ENCODE measurements at regions of chr3 and their contacts with region 1.

Region 1: GRCh38 chr3:19256313-19256712 is 108.0 kb downstream of the KCNH8 start:
- DNase-seq: no peak
- H3K4me3 ChIP-seq: no peak overlapping the region
- H3K27ac ChIP-seq: no peak overlapping the region
- H3K4me1 ChIP-seq: no peaks in the 10 kb centered on the region
- CTCF ChIP-seq: 0 out of 2 replicates have a peak, but pooled peaks have one; percentile 35

Region 2: GRCh38 chr3:18937574-18937973 is 318.7 kb before region 1 on chr3:
- CTCF ChIA-PET with region 1: no interaction called
- POLR2A ChIA-PET with region 1: no interaction called
- intact Hi-C with region 1: no loop called
- DNase-seq: no peak
- H3K4me3 ChIP-seq: no peak overlapping the region
- H3K27ac ChIP-seq: no peak overlapping the region
- H3K4me1 ChIP-seq: no peaks in the 10 kb centered on the region
- CTCF ChIP-seq: no peak

Region 3: GRCh38 chr3:19046440-19046839 is 209.9 kb before region 1 on chr3:
- CTCF ChIA-PET with region 1: no interaction called
- POLR2A ChIA-PET with region 1: no interaction called
- intact Hi-C with region 1: no loop called
- DNase-seq: peak; percentile 18
- H3K4me3 ChIP-seq: no peak overlapping the region
- H3K27ac ChIP-seq: no peak overlapping the region
- H3K4me1 ChIP-seq: no peaks in the 10 kb centered on the region
- CTCF ChIP-seq: peak; percentile 75

Region 4: DNA sequence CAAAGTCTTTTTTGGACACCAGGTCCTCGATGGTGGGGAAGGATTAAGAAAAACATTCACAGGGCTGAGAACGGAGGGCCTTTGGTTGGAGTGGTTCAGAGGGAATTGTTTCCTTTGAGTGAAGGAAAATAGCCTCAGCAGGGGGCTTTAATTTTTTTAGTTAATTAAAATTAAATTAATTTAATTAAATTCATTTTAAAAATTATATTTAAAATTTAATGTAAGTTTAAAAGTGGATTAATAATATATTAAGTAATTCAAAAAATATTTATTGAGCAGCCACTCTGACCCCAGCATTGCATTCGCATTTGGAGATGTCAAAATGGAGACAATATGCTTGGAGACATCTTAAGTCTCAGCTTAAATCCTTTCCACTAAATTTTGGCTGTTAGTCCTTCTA is 28.7 kb after region 1 on chr3:
- CTCF ChIA-PET with region 1: no interaction called
- POLR2A ChIA-PET with region 1: interaction called, 11 read pairs
- intact Hi-C with region 1: no loop called
- DNase-seq: no peak
- H3K4me3 ChIP-seq: no peak overlapping the region
- H3K27ac ChIP-seq: no peak overlapping the region
- H3K4me1 ChIP-seq: no peaks in the 10 kb centered on the region
- CTCF ChIP-seq: no peak

Measured in OCI-LY7 (cell line).